ENCODE measurements at regions of chr7 and their contacts with region 1.

Region 1: DNA sequence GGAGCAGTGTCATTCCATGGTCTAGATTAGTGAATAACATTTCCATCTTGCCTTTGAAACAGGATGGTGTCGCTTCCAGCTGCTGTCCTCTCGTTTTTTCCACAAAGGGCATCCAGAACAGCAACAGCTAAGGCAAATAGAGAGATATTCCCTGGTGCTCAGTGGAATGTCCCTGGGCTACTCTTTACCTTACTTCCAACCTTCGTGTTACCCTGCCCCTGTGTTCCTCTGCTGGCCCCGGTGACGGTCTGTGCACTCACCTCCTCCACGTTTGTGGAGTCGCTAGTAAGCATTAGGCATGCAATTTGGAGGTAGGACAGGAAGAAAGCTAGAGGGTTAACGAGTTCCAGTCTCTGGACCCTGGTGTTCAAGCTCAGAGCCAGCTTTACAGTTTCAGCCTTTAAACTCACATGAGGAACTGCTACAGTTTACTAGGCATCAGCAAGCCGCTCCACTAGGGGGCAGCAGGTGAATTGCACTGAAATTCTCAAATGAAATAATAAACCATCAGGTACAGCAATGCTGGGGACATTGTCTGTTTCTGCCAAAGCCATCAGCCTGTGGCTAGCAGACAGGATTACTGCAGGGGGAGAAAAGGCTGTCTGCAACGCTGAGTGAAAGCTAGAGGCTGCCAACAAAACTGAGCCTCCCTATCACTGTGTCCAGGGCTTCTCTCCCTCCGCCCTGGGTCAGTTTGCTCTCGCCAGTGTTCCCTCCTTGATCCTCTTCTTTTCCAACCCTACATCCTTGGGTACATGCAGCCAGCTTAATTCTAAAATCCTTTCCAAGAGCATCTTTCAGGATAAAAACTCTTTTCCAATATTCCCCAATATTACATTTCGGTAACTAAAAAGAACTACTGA is 9.0 kb downstream of the MRPL32 start:
- DNase-seq: peak; percentile 74
- ATAC-seq: peak; percentile 53
- H3K4me3 ChIP-seq: no peak overlapping the region
- H3K4me3 Mint-ChIP-seq: no peak overlapping the region
- H3K27ac ChIP-seq: no peak overlapping the region
- H3K27ac Mint-ChIP-seq: no peak overlapping the region
- H3K4me1 ChIP-seq: no peaks in the 10 kb centered on the region
- H3K4me1 Mint-ChIP-seq: peaks cover 6% of the 10 kb centered on the region
- H3K27me3 ChIP-seq: no peaks in the 10 kb centered on the region
- H3K27me3 Mint-ChIP-seq: no peaks in the 10 kb centered on the region
- CTCF ChIP-seq: peak; percentile 91

Region 2: DNA sequence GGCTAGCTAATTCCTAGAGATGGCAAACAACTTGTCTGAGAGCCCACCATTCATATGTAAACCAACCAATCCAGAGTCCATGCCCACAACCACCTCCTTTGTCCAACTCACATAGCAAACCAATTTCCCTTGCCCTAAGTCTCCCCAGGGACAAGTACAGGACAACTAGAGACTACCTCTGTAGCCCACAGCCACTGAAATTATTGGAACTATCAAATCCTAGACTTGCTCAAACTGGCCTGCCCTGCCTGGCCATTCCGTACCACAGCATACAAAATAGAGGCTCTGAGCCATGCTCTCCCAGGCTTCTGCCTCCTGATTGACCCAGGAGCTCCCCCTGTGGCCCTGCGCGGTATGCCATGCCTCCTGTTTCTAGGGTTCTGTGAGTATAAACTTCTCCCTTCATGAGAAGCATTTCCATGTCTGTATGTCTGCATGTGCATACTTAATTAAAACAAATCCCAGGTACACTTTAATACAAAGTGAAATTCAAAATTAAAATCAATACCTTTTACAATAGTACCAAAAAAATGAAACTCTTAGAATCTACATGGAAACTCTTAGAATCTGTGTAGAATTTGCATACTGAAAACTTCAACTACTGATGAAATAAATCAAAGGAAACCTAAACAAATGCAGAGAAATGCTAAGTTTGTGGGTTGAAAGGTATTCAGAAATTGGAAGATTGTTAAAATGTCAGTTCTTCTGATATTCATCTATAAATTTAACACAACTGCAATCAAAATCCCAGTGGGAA is 167.2 kb after region 1 on chr7:
- CTCF ChIA-PET with region 1: interaction called, 3 read pairs
- POLR2A ChIA-PET with region 1: no interaction called
- intact Hi-C with region 1: loop called (anchors 2 kb)
- DNase-seq: peak; percentile 30
- ATAC-seq: no peak
- H3K4me3 ChIP-seq: no peak overlapping the region
- H3K4me3 Mint-ChIP-seq: no peak overlapping the region
- H3K27ac ChIP-seq: no peak overlapping the region
- H3K27ac Mint-ChIP-seq: no peak overlapping the region
- H3K4me1 ChIP-seq: peaks cover 0 to 4% of the 10 kb centered on the region in 2 donors
- H3K4me1 Mint-ChIP-seq: peaks cover 7% of the 10 kb centered on the region
- H3K27me3 ChIP-seq: peaks cover 0 to 20% (median 15%) of the 10 kb centered on the region in 4 experiments
- H3K27me3 Mint-ChIP-seq: peaks cover 41% of the 10 kb centered on the region
- CTCF ChIP-seq: peak; percentile 79

Region 3: DNA sequence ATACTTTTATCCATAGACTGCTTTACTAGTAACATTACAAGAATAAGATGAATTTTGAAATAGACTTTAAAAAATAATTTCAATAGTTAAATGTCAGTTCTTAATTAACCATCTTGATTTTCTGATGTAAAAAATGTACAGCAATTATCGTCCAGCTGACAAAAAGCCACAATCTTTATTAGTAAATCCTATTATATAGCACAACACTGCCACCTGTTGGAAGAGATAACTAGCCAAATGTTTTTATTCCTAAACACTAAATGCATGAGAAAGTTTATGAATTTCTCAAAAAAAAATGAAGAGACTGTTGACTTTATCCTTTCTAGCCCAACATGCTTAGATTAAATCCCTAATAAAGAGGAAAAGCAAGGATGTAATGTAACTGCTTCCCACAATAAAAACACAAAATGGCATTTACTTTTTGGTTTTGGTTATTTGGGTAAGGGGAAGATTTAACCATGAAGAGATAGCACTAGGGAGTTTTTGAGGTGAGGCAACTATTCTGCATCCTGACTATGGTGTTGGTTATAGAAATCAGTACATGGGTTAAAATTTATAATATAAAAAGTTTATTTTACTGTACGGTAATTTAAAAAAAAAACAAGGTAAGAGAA is 780.1 kb after region 1 on chr7:
- CTCF ChIA-PET with region 1: interaction called, 30 read pairs
- POLR2A ChIA-PET with region 1: no interaction called
- intact Hi-C with region 1: no loop called
- DNase-seq: peak; percentile 73
- ATAC-seq: peak; percentile 33
- H3K4me3 ChIP-seq: no peak overlapping the region
- H3K4me3 Mint-ChIP-seq: no peak overlapping the region
- H3K27ac ChIP-seq: no peak overlapping the region
- H3K27ac Mint-ChIP-seq: no peak overlapping the region
- H3K4me1 ChIP-seq: no peaks in the 10 kb centered on the region
- H3K4me1 Mint-ChIP-seq: peaks cover 22% of the 10 kb centered on the region
- H3K27me3 ChIP-seq: no peaks in the 10 kb centered on the region
- H3K27me3 Mint-ChIP-seq: no peaks in the 10 kb centered on the region
- CTCF ChIP-seq: peak; percentile 89

Measured in B cell (primary cell).